Cardiac septum (tissue), 1 donor: ENCODE measurements at regions of chr11 and their contacts with region 1.

Region 1: GRCh38 chr11:119666463-119667131 is 62.4 kb downstream of the NECTIN1 start:
- DNase-seq: peak; percentile 93

Region 2: GRCh38 chr11:119728651-119729580 is 62.3 kb after region 1 on chr11 and contains the start of gene NECTIN1:
- intact Hi-C with region 1: loop called (anchors 2 kb)
- DNase-seq: peak; percentile 94
- total RNA-seq, gene NECTIN1: 10.4 TPM

Region 3: GRCh38 chr11:119975561-119976152 is 309.1 kb after region 1 on chr11:
- intact Hi-C with region 1: no loop called
- DNase-seq: no peak

Region 4: GRCh38 chr11:120013325-120014270 is 347.0 kb after region 1 on chr11:
- intact Hi-C with region 1: loop called (anchors 5 kb)
- DNase-seq: no peak

Region 5: GRCh38 chr11:120108154-120108865 is 441.7 kb after region 1 on chr11:
- intact Hi-C with region 1: loop called (anchors 2 kb)
- DNase-seq: no peak

Region 6: DNA sequence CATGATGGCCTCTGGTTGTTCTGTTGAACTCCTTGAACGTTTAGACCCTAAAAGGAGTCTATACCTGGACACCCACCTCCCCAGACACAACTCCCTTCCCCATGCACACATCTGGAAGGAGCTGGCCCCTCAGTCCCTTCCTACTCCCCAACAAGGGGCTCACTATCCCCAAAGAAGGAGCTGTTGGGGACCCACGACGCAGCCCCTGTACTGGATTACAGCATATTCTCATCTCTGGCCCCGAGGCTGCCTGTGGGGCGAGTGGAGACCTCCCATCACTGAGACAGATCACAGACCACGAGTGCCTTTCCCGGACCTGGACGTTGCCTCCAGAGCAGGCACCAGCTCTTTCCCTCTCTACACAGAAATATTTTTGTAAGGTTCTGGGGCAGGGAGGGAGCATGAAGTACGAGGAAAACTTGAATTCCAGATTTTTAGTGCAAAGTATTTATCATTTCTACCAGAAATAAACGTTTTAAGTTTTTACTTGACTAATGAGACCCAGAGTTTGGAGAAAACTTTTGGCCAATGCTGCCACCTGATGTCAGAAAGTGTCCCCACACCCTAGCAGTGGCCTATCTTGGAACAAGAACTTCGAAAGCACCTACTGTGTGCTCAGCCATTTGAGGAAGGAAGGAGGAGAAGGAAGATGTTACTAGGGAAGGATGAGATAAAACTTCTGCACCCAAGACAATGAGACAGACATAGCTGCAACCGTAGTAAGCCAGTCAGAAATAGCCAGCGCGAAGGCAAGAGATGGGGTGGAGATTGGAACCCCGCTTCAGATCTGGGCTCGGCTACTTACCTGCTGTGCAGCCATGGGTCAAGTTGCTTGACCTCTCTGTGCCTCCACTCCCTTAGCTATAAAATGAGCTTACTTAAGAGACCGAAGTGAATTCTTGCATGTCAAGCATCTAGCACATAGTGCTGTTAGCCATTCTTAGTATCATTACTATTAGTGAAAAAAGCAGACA is 563.1 kb after region 1 on chr11:
- intact Hi-C with region 1: loop called (anchors 5 kb)
- DNase-seq: no peak